A549 (cell line): ENCODE measurements at regions of chr19 and their contacts with region 1.

Region 1: GRCh38 chr19:45439569-45440254 is 16.0 kb upstream of the ERCC1 start:
- DNase-seq: peak; percentile 74 to 83
- ATAC-seq: peak; percentile 26 to 55
- H3K4me3 ChIP-seq: peak overlapping the region; percentile 52
- H3K27ac ChIP-seq: peak overlapping the region; percentile 80 to 95
- H3K4me1 ChIP-seq: peaks cover 27% of the 10 kb centered on the region
- CTCF ChIP-seq: peak; percentile 100
- EP300 ChIP-seq: no peak
- POLR2A ChIP-seq: peak; percentile 12; the same call in 1 of the 2 replicates
- RAD21 ChIP-seq: peak; percentile 77 to 99

Region 2: DNA sequence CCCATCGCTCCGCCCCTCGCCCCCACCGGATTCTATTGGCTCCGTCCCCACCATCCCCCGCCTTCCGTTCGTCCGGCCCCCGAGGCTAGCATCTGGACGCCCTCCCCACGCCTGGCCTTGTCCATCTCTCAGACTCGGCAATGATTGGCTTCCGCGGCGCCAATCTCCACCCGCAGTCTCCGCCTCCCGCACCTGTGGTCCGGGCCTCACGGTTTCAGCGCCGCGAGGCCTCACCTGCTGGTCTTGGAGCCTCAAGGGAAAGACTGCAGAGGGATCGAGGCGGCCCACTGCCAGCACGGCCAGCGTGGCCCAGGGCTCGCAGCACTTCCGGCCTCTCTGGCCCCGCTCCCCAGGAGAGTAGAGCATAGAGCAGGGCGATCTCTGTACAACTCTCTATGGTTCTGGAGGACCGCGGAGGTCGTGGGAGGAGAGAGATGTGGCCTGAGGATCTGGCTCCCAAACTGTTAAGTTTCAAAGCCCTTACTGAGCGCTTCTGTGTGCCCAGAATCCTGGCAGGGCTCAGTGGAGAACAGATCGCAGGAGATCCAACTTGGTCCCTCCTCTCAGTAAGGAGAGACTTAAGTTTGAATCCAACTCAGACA is 16.0 kb before region 1 on chr19 and contains the start of gene ERCC1:
- CTCF ChIA-PET with region 1: interaction called, 201 read pairs
- POLR2A ChIA-PET with region 1: interaction called, 3 read pairs
- DNase-seq: peak; percentile 98
- ATAC-seq: peak; percentile 77 to 87
- H3K4me3 ChIP-seq: peak within 1 kb of the TSS; percentile 58
- H3K27ac ChIP-seq: peak within 1 kb of the TSS; percentile 93 to 95
- H3K4me1 ChIP-seq: peaks cover 31% of the 10 kb centered on the region
- CTCF ChIP-seq: no peak
- EP300 ChIP-seq: peak in 1 of 2 experiments; percentile 10; a peak in 1 of 5 replicates
- POLR2A ChIP-seq: peak; percentile 84
- RAD21 ChIP-seq: no peak
- polyA plus RNA-seq, gene ERCC1: 81.7 and 109 TPM in 2 replicates

Region 3: GRCh38 chr19:45506246-45506990 is 66.7 kb after region 1 on chr19:
- CTCF ChIA-PET with region 1: interaction called, 418 read pairs
- POLR2A ChIA-PET with region 1: no interaction called
- DNase-seq: peak; percentile 97 to 98
- ATAC-seq: peak; percentile 79 to 80
- H3K4me3 ChIP-seq: peak overlapping the region; percentile 70
- H3K27ac ChIP-seq: peak overlapping the region; percentile 99
- H3K4me1 ChIP-seq: peaks cover 28% of the 10 kb centered on the region
- CTCF ChIP-seq: peak; percentile 81
- EP300 ChIP-seq: peak; percentile 17 to 30; a peak in 1 of 5 replicates
- POLR2A ChIP-seq: peak; percentile 78
- RAD21 ChIP-seq: peak; percentile 48 to 59